HepG2 (cell line): ENCODE measurements at regions of chr13 and their contacts with region 1.

Region 1: GRCh38 chr13:91722267-91722884 is 324.0 kb downstream of the GPC5 start:
- DNase-seq: no peak
- ATAC-seq: no peak
- H3K4me3 ChIP-seq: no peak overlapping the region
- H3K27ac ChIP-seq: no peak overlapping the region
- H3K4me1 ChIP-seq: no peaks in the 10 kb centered on the region
- H3K27me3 ChIP-seq: peaks cover 0 to under 1% of the 10 kb centered on the region in 2 experiments; a peak in 1 of 5 replicates
- CTCF ChIP-seq: peak; percentile 30
- EP300 ChIP-seq: no peak
- POLR2A ChIP-seq: no peak
- RAD21 ChIP-seq: no peak

Region 2: GRCh38 chr13:91381371-91381770 is 341.0 kb before region 1 on chr13:
- CTCF ChIA-PET with region 1: no interaction called
- POLR2A ChIA-PET with region 1: no interaction called
- in situ Hi-C with region 1: no loop called
- intact Hi-C with region 1: loop called (anchors 5 kb)
- DNase-seq: no peak
- ATAC-seq: no peak
- H3K4me3 ChIP-seq: no peak overlapping the region
- H3K27ac ChIP-seq: no peak overlapping the region
- H3K4me1 ChIP-seq: no peaks in the 10 kb centered on the region
- H3K27me3 ChIP-seq: no peaks in the 10 kb centered on the region
- CTCF ChIP-seq: peak; percentile 22; the same call in 1 of the 2 replicates
- EP300 ChIP-seq: no peak
- POLR2A ChIP-seq: no peak
- RAD21 ChIP-seq: no peak

Region 3: DNA sequence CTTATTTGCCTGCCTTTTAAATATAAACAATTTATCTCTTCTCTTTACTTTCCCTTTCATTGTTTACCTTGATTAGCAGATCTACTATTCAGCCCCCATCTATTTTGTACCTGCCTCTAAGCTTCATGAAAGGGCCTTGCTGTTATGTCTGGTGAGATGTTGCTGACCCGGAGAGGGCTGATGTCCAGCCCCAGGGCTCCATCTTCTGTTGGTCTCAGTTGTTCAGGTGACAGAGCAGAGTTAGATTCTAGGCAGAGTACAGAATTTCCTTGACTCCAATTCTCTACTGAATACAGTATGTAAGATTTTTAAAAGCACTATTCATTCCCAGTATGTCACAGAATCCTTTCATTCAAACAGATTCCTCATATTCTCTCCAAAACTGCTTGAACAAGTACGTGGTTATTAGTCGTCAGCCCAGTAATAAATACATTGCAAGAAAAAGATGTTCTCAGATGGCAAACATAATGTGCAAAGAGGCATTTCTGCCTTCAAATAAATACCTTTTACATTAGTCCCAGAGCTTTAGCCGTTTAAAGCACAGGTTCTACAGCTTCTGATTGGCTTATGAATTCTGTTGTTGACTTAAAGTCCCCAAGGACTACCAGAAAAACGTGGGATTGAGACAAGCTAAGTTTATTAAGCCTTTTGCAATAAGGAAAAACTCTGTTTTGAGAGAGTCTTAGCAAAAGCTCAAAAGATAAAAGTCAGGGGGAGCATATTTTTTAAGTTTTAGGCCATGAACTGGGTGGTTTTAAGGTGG is 164.9 kb before region 1 on chr13:
- CTCF ChIA-PET with region 1: no interaction called
- POLR2A ChIA-PET with region 1: no interaction called
- in situ Hi-C with region 1: no loop called
- intact Hi-C with region 1: no loop called
- DNase-seq: no peak
- ATAC-seq: no peak
- H3K4me3 ChIP-seq: no peak overlapping the region
- H3K27ac ChIP-seq: no peak overlapping the region
- H3K4me1 ChIP-seq: no peaks in the 10 kb centered on the region
- H3K27me3 ChIP-seq: no peaks in the 10 kb centered on the region
- CTCF ChIP-seq: no peak
- EP300 ChIP-seq: no peak
- POLR2A ChIP-seq: no peak
- RAD21 ChIP-seq: no peak